ENCODE measurements at regions of chr1 and their contacts with region 1.

Region 1: GRCh38 chr1:214377886-214378285 is 96.9 kb downstream of the SMYD2 start:
- DNase-seq: no peak

Region 2: DNA sequence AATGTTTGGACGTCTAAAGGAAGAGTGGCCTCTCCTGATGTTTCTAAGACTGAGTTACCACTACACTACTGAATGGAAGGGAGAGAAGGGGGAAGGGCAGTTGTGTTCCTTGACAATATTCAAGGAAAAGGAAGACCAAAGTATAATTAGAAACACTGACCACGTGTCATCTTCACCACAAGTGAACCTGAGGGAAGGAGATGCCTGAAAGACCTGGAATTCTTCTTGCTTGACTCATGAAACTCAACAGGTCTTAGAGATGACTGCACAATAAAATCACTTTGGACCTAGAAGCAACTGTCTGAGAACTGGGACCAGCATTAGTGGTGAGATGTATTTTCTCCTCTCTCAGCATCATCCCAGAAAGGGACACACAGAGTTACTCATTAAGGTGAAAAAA is 116.8 kb after region 1 on chr1:
- intact Hi-C with region 1: loop called in 1 of 2 experiments (anchors 10 kb)
- DNase-seq: no peak